Activated naive CD4-positive, alpha-beta T cell treated with anti-CD3 and anti-CD28 coated beads for 36 hours (primary cell): ENCODE measurements at regions of chr10 and their contacts with region 1.

Region 1: DNA sequence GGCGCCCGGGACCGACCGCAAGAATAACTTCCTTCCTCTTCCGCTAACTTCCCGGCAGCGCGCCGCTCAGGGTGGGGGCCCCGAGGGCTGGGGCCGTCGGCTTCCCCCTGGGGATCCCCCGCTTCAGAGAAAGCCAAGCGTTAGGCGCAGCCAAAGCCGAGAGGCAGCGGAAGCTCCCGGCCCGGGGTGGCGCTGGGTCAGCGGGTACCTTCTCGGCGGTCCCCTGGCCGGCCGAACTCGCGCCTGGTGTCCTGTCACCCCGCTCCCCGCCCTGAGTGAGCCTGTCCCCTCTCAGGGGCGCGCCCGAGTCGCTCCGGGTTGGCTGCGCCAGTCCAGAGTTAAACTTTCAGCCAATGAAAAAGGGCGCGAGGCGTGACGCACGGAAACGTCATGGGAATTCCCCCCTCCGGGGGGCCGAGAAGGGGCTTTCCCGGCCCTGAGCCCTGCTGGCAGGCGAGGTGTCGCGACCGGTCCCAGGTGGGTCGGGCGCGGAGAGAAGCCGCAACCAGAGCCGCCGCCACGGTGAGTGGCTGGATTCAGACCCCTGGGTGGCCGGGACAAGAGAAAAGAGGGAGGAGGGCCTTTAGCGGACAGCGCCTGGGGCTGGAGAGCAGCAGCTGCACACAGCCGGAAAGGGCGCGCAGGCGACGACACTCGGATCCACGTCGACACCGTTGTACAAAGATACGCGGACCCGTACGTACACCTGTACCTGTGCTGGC is 1.3 kb upstream of the NFKB2 start:
- DNase-seq: peak; percentile 99
- H3K4me3 Mint-ChIP-seq: peak overlapping the region; percentile 87
- H3K27ac Mint-ChIP-seq: peak overlapping the region; percentile 99
- H3K4me1 Mint-ChIP-seq: peaks cover 44% of the 10 kb centered on the region
- H3K27me3 Mint-ChIP-seq: no peaks in the 10 kb centered on the region

Region 2: GRCh38 chr10:101704331-101704730 is 689.9 kb before region 1 on chr10:
- CTCF ChIA-PET with region 1: no interaction called
- intact Hi-C with region 1: no loop called
- DNase-seq: no peak
- H3K4me3 Mint-ChIP-seq: no peak overlapping the region
- H3K27ac Mint-ChIP-seq: no peak overlapping the region
- H3K4me1 Mint-ChIP-seq: peaks cover 28% of the 10 kb centered on the region
- H3K27me3 Mint-ChIP-seq: peaks cover 39% of the 10 kb centered on the region

Region 3: GRCh38 chr10:102132563-102133372 is 261.5 kb before region 1 on chr10 and contains the start of gene PPRC1:
- CTCF ChIA-PET with region 1: no interaction called
- intact Hi-C with region 1: loop called (anchors 1 kb)
- DNase-seq: peak; percentile 99
- H3K4me3 Mint-ChIP-seq: peak within 1 kb of the TSS; percentile 97
- H3K27ac Mint-ChIP-seq: peak within 1 kb of the TSS; percentile 96
- H3K4me1 Mint-ChIP-seq: peaks cover 42% of the 10 kb centered on the region
- H3K27me3 Mint-ChIP-seq: no peaks in the 10 kb centered on the region
- total RNA-seq, gene PPRC1: 54.6 to 55.0 TPM

Region 4: DNA sequence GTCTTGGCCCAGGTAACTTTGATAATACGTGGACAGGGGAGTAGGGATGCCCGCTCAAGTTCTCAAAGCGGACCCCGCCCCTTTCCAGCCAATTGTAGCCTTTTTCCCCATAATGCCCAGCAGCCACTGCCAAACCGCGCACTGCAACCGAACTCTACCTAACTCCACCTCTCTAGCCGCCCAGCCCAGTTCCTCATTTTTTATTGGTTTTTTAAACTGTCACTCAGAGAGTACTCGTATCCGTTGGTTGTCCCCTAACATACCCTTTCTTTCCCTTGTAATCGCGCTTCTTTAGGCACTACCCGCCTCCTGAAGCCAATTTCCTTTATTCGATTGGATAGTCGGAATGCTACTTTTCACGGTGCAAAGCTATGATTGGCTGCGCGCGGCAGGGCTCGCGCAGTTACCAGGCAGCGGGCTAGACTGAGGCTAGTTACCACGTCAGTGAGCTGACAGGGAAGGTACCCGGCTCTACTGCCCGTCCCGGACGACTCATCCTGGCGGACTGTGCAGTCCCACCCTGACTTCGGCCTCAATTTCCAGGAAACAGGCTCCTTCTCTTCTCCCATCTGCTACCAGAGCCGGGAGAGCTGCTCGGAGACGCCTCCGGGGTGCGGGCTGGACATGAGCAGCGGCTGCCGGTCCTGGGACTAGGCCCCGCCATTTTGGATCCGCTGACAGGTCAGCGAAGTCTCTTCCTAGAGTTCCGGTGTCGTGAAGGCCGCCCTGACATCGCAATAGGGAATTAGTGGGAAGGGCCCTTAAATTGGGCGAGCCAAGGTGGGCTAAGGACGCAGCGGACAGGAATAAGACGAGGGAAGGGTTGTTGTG is 148.9 kb before region 1 on chr10 and contains the start of gene GBF1:
- CTCF ChIA-PET with region 1: interaction called, 4 read pairs
- intact Hi-C with region 1: loop called (anchors 1 kb)
- DNase-seq: peak; percentile 95
- H3K4me3 Mint-ChIP-seq: peak within 1 kb of the TSS; percentile 92
- H3K27ac Mint-ChIP-seq: peak within 1 kb of the TSS; percentile 86
- H3K4me1 Mint-ChIP-seq: peaks cover 41% of the 10 kb centered on the region
- H3K27me3 Mint-ChIP-seq: peaks cover 15% of the 10 kb centered on the region
- total RNA-seq, gene GBF1: 32.1 to 34.5 TPM

Region 5: GRCh38 chr10:102384053-102384452 is 10.2 kb before region 1 on chr10:
- CTCF ChIA-PET with region 1: interaction called, 15 read pairs
- intact Hi-C with region 1: no loop called
- DNase-seq: peak; percentile 49
- H3K4me3 Mint-ChIP-seq: no peak overlapping the region
- H3K27ac Mint-ChIP-seq: no peak overlapping the region
- H3K4me1 Mint-ChIP-seq: peaks cover 10% of the 10 kb centered on the region
- H3K27me3 Mint-ChIP-seq: no peaks in the 10 kb centered on the region

Region 6: DNA sequence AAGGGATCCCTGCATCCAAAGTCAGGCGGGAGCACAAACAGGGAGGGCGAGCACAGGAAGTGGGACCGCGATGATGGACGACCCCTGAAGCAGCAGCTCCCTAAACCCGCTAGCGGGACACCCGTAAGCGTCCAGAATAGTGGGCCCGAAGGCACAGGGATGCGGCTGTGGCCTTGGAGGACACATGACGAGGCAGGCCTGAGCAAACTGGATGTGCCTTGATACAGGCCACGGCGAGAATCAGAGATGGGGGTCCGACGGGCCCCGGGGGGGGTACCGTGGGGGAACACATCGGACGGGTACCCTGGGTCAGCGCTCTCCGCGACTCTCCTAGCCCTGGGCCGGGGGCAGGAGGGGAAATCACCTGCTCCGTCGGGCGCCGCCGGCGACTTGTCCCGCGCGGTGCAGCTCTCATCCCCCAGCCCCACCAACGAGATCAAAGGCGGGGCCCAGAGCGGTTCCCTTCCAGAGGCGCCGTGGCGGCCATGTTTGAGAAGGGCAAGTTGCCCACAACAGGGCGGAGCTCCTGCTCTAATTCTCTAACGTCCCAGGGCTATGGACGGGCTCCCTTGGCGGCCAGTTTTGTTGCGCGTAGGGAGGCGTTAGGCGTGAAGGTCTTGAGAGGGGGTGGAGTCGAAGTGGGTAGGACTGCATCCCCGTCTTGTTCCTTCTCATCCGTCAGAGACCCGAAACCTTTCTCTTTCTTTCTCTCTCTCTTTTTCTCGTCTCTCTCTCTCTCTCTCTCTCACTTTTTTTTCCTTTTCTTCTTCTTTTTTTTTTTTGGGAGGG is 38.1 kb after region 1 on chr10 and contains the start of gene CUEDC2:
- CTCF ChIA-PET with region 1: interaction called, 6 read pairs
- intact Hi-C with region 1: loop called (anchors 1 kb)
- DNase-seq: peak; percentile 99
- H3K4me3 Mint-ChIP-seq: peak within 1 kb of the TSS; percentile 90
- H3K27ac Mint-ChIP-seq: peak within 1 kb of the TSS; percentile 92
- H3K4me1 Mint-ChIP-seq: peaks cover 47% of the 10 kb centered on the region
- H3K27me3 Mint-ChIP-seq: no peaks in the 10 kb centered on the region
- total RNA-seq, gene CUEDC2: 63.3 to 64.4 TPM

Region 7: DNA sequence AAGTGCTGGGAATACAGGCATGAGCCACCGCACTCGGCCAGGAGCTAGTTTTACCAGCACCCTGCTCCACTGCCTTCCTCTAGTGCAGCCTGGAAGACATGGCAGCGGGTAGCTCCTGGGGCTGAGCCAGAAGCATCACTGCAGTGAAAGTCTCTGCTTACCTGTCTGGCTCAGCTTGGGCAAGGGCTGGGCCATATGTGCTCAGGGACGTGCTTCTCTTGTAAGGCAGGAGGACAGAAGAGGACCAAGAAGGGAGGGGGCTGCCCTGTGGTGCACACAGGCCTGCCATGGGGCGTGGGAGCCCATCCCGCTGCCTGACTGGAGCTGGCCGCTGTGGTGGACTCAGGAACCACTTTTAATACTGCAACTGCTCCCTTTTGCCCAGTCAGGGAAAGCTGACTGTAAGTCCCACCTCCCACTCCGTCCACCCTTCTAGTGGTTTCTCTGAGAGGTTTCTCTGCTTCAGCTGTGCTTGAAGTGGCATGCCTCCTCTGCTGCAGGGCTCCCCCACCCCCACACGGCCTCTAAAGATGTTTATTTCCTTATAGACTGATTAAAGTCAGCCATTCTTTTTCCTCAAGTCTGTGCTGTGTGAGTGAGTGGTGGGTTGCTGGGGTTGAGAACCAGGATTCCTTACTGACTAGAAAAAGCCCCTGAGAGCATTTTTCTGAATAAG is 82.4 kb after region 1 on chr10:
- CTCF ChIA-PET with region 1: interaction called, 17 read pairs
- intact Hi-C with region 1: loop called (anchors 1 kb)
- DNase-seq: no peak
- H3K4me3 Mint-ChIP-seq: no peak overlapping the region
- H3K27ac Mint-ChIP-seq: peak overlapping the region; percentile 31
- H3K4me1 Mint-ChIP-seq: peaks cover 43% of the 10 kb centered on the region
- H3K27me3 Mint-ChIP-seq: no peaks in the 10 kb centered on the region

Region 8: DNA sequence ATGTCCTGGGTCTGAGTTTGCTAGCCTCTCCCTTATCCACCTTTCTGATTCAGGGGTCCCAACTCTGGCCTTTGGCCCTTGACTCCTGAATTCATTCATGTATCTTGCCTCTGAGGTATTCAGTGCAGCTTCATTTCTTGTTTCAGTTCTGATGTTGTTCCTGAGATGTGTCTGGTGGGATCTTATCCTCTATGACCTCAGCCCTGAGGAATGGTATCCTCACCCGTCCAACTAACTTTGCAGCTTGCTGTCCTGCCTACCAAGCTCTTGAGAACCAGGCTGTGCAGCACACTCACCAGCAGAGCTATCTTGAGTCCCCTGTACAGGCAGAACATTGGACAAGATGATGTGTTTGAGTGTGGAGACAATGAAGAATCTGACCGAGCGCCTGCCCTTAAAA is 123.3 kb after region 1 on chr10:
- CTCF ChIA-PET with region 1: no interaction called
- intact Hi-C with region 1: no loop called
- DNase-seq: no peak
- H3K4me3 Mint-ChIP-seq: no peak overlapping the region
- H3K27ac Mint-ChIP-seq: no peak overlapping the region
- H3K4me1 Mint-ChIP-seq: peaks cover 3% of the 10 kb centered on the region
- H3K27me3 Mint-ChIP-seq: no peaks in the 10 kb centered on the region

Region 9: GRCh38 chr10:102596506-102596971 is 202.3 kb after region 1 on chr10:
- CTCF ChIA-PET with region 1: no interaction called
- intact Hi-C with region 1: no loop called
- DNase-seq: peak; percentile 58
- H3K4me3 Mint-ChIP-seq: no peak overlapping the region
- H3K27ac Mint-ChIP-seq: no peak overlapping the region
- H3K4me1 Mint-ChIP-seq: no peaks in the 10 kb centered on the region
- H3K27me3 Mint-ChIP-seq: no peaks in the 10 kb centered on the region

Region 10: GRCh38 chr10:102743588-102744373 is 349.5 kb after region 1 on chr10 and contains the start of gene WBP1L:
- CTCF ChIA-PET with region 1: no interaction called
- intact Hi-C with region 1: loop called (anchors 1 kb)
- DNase-seq: peak; percentile 97
- H3K4me3 Mint-ChIP-seq: peak within 1 kb of the TSS; percentile 90
- H3K27ac Mint-ChIP-seq: peak within 1 kb of the TSS; percentile 83
- H3K4me1 Mint-ChIP-seq: peaks cover 43% of the 10 kb centered on the region
- H3K27me3 Mint-ChIP-seq: no peaks in the 10 kb centered on the region
- total RNA-seq, gene WBP1L: 10.5 to 11.8 TPM

Region 11: GRCh38 chr10:102812231-102812876 is 418.1 kb after region 1 on chr10:
- CTCF ChIA-PET with region 1: no interaction called
- intact Hi-C with region 1: no loop called
- DNase-seq: no peak
- H3K4me3 Mint-ChIP-seq: no peak overlapping the region
- H3K27ac Mint-ChIP-seq: no peak overlapping the region
- H3K4me1 Mint-ChIP-seq: peaks cover 7% of the 10 kb centered on the region
- H3K27me3 Mint-ChIP-seq: no peaks in the 10 kb centered on the region